Activated naive CD4-positive, alpha-beta T cell treated with anti-CD3 and anti-CD28 coated beads for 36 hours (primary cell): ENCODE measurements at regions of chr5 and their contacts with region 1.

Region 1: GRCh38 chr5:175517818-175518450 is 39.6 kb downstream of the SFXN1 start:
- DNase-seq: peak; percentile 95
- H3K4me3 Mint-ChIP-seq: peak overlapping the region; percentile 59
- H3K27ac Mint-ChIP-seq: peak overlapping the region; percentile 99
- H3K4me1 Mint-ChIP-seq: peaks cover 87% of the 10 kb centered on the region
- H3K27me3 Mint-ChIP-seq: no peaks in the 10 kb centered on the region

Region 2: DNA sequence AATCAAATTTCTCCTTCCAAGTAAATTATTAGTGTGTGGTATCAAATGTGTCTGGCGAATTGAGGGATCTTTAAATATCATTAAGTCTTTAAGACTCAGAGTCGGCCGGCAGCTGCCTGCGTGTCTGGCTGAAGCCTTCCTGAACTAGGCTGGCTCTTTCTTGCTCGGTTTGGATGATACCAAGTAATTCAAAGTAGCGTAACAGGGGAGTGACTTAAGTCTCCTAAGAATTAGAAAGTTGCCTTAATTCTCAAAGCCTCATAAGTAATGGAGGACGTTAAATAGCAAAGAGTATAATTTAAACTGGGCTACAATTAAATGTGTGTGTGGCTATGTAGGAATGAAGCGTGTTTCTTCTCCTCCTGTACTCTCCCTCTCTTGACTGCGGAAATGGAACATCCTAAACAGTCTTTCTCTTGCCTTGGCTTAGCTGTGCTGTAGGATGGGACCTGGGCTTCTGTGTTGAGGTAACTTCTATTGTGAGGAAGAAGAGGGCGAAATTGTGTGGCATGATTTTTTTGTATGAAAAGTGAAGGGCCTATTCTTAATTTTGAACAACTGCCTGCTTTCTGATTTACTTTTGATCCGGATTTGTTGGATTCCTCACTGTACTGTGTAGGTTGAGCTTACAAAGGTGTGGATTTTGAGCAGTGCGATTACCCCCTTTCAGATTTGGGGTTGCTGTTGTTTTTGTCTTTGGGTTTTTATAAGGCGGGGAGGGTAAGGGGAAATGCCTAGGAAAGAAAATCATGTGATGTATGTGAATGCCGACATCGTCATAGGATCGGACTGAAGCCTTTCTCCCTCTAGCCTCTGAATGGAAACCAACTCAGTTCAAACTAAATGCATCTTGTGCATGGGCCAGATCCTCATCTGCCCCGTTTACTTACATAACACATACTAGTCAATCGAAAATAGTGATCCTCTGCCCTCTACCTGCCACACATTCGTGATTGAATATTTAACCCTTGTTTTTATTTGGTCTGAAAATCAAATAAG is 1599.8 kb before region 1 on chr5:
- CTCF ChIA-PET with region 1: no interaction called
- intact Hi-C with region 1: loop called (anchors 2 kb)
- DNase-seq: peak; percentile 72
- H3K4me3 Mint-ChIP-seq: no peak overlapping the region
- H3K27ac Mint-ChIP-seq: no peak overlapping the region
- H3K4me1 Mint-ChIP-seq: peaks cover 18% of the 10 kb centered on the region
- H3K27me3 Mint-ChIP-seq: no peaks in the 10 kb centered on the region

Region 3: GRCh38 chr5:174151599-174152181 is 1366.2 kb before region 1 on chr5:
- CTCF ChIA-PET with region 1: no interaction called
- intact Hi-C with region 1: no loop called
- DNase-seq: no peak
- H3K4me3 Mint-ChIP-seq: no peak overlapping the region
- H3K27ac Mint-ChIP-seq: no peak overlapping the region
- H3K4me1 Mint-ChIP-seq: no peaks in the 10 kb centered on the region
- H3K27me3 Mint-ChIP-seq: peaks cover 10% of the 10 kb centered on the region

Region 4: DNA sequence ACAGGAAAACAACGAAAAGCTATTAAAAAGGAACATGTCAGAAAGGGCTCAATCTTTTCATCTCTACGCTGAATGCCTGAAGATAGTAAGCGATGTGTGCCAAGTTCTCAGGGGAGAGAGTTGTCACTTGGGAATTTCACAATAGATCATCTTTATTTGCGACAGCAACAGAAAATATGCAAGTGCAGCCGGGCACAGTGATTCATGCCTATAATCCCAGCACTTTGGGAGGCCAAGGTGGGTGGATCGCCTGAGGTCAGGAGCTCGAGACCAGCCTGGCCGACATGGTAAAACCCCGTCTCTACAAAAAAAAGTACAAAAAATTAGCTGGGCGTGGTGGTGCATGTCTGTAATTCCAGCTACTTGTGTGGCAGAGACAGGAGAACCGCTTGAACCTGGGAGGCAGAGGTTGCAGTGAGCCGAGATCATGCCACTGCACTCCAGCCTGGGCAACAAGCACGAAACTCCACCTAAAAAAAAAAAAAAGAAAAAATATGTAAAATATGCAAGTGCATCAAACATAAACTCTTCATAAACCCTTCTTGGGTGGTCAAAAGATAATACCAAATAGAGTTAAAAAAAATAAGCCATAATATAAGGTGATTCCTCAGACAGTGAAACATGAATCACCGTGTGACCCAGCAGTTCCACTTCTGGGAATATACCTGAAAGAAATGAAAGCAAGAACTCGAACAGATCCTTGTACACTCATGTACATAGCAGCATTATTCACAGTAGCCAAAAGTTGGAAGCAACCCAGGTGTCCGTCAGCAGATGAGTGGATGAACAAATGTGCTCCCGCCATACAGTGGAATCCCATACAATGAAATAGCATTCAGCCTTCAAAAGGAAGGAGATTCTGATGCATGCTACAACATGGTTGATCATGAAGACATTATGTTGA is 23.4 kb before region 1 on chr5:
- CTCF ChIA-PET with region 1: no interaction called
- intact Hi-C with region 1: loop called (anchors 1 kb)
- DNase-seq: peak; percentile 62
- H3K4me3 Mint-ChIP-seq: peak overlapping the region; percentile 1
- H3K27ac Mint-ChIP-seq: peak overlapping the region; percentile 80
- H3K4me1 Mint-ChIP-seq: peaks cover 67% of the 10 kb centered on the region
- H3K27me3 Mint-ChIP-seq: no peaks in the 10 kb centered on the region

Region 5: DNA sequence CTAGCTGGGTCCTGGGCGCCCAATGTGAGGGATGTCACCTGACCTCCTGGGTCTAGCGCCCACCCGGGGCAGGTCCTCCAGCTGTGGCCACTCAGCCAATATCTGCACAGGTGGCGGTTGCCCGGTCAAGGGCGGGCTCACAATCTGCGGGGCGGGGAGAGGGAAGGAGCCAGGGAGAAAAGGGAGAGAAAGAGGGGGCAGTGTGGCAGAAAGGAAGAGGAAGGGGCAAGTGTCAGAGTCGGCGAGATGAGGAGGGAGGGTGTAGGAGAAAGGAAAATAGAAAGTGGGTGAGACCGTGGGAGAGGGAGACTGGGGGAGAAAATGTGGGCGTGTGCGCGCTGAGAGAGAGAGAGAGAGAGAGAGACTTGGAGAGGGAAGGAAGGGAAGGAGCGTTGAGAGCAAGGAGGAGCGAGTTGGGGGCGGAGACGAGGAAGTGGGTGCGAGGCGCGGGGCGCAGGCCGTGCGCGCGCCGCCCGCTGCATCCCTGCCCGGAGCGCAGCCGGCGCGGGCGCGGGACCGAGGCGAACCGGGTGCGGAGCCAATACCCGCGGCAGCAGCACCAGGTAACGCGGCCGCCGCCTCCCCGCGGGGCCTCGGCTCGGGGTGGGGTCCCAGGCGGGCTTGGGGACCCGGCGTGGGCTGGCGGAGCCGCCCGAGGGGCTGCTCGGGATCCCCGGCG is 139.8 kb after region 1 on chr5 and contains the start of gene HRH2:
- CTCF ChIA-PET with region 1: no interaction called
- intact Hi-C with region 1: loop called (anchors 1 kb)
- DNase-seq: peak; percentile 74
- H3K4me3 Mint-ChIP-seq: peak within 1 kb of the TSS; percentile 90
- H3K27ac Mint-ChIP-seq: peak within 1 kb of the TSS; percentile 72
- H3K4me1 Mint-ChIP-seq: peaks cover 79% of the 10 kb centered on the region
- H3K27me3 Mint-ChIP-seq: no peaks in the 10 kb centered on the region
- total RNA-seq, gene HRH2: 8.7 to 10.0 TPM

Region 6: GRCh38 chr5:176361437-176362232 is 843.7 kb after region 1 on chr5 and contains the start of gene KIAA1191:
- CTCF ChIA-PET with region 1: no interaction called
- intact Hi-C with region 1: loop called (anchors 5 kb)
- DNase-seq: peak; percentile 97
- H3K4me3 Mint-ChIP-seq: peak within 1 kb of the TSS; percentile 99
- H3K27ac Mint-ChIP-seq: peak within 1 kb of the TSS; percentile 91
- H3K4me1 Mint-ChIP-seq: peaks cover 31% of the 10 kb centered on the region
- H3K27me3 Mint-ChIP-seq: no peaks in the 10 kb centered on the region
- total RNA-seq, gene KIAA1191: 33.5 to 33.7 TPM